AG04449 (cell line): ENCODE measurements at regions of chr20 and their contacts with region 1.

Region 1: DNA sequence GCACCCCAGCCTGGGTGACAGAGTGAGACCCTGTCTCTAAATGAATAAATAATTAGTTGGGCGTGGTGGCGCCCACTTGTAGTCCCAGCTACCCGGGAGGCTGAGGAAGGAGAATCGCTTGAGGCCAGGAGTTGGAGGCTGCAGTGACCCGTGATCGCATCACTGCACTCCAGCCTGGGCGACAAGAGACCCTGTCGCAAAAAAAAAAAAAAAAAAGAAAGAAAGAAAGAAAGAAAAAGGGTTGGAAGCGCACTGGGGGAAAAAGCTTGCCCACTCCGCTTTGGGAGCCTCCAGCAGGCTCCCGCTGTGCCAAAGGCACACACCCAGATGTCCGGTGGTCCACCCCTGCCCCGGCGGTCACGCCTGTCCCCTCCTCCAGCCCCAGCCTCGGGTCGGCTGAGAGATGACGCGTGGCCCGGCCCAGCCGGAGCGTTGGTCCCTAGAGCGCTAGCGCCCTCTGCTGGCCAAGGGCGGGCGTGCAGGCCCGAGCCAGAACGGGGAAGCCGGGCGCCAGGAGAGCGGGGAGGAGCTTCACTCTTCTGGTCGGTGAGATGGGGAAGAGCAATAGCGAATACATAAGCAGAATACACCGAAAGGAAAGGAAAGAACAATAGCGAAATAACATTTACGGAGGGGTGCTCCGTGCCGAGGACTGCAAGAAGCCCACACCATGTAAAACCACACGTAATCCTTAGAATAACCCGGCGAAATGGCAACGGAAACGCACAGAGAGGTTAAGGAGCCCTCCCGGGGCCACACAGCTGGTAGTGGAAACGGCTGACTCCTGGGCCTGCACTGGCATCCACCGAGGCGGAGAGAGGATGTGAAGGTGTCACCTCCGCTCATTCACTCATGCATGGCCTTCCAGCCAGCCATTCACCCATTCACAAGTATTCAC is 41.7 kb downstream of the UBE2V1 start:
- DNase-seq: no peak
- H3K4me3 ChIP-seq: peak overlapping the region; percentile 59
- CTCF ChIP-seq: peak; percentile 98

Region 2: DNA sequence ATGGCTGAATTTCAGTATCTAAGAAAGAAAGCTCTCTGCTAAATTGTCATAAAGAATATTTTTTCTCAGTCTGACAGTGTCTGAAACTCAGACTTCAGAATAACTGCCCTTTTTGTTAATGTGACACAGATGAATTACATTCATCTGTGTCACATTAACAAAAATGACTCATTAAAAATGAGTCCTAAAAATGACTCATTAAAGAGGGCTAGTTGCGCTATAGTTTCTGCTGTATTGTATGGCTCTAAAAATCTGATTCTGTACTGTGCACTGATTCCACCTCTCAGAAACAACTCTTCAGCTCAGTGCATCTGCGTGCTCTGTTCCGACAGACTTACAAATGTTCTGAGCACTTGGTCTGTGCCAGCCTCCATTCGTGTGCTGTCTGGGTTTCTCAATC is 120.1 kb before region 1 on chr20:
- CTCF ChIA-PET with region 1: interaction called, 25 read pairs
- POLR2A ChIA-PET with region 1: no interaction called
- DNase-seq: no peak
- H3K4me3 ChIP-seq: no peak overlapping the region
- CTCF ChIP-seq: no peak

Region 3: GRCh38 chr20:49964964-49965780 is 106.1 kb before region 1 on chr20:
- CTCF ChIA-PET with region 1: interaction called, 66 read pairs
- POLR2A ChIA-PET with region 1: no interaction called
- DNase-seq: no peak
- H3K4me3 ChIP-seq: no peak overlapping the region
- CTCF ChIP-seq: peak; percentile 57

Region 4: GRCh38 chr20:50054626-50055511 is 16.4 kb before region 1 on chr20:
- CTCF ChIA-PET with region 1: interaction called, 40 read pairs
- POLR2A ChIA-PET with region 1: no interaction called
- DNase-seq: no peak
- H3K4me3 ChIP-seq: no peak overlapping the region; the same call in 1 of the 2 replicates
- CTCF ChIP-seq: no peak

Region 5: DNA sequence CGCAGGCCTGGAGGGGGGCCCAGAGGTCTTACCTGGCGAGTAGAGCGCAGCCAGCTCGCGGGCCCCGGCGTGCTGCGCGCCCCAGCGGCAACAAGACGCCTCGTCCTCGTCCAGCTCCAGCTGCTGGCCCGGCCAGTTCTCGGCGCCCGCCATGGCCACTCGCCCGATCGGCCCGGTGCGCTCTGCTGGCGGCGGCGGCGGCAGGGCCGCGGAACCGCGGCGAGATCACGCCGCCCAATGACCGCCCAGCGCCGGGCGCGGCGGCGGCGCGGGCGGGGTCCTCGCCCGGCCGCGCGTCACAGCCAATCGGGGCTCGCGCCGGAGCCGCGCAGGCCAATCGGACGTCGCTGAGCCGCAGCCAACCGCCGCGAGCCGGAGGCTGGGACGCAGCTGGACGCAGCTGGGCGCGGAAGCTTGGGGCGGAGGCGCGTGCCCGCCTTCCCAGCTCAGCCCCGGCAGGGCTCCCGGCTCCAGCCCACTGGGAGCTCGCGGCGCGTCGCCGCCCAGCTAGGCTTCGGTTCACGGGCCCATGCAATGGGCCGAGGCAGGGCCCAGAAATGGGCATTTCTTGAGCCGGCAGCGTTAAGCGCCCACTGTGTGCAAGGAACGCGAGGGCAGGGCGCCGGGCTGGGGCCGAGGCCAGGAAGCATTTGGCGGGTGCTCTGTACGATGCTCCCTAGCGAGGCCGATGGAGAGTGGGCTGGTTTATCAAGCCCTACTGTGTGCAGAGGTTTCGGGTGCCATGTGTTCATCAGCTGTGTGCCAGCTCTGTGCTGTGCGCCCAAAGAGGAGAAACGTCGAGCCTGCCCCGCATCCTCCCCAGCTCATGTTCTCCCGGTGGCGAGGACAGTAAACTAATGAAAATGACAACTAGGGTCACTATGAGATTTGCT is 82.5 kb after region 1 on chr20 and contains the start of gene PEDS1:
- CTCF ChIA-PET with region 1: interaction called, 10 read pairs
- POLR2A ChIA-PET with region 1: no interaction called
- DNase-seq: no peak
- H3K4me3 ChIP-seq: peak within 1 kb of the TSS; percentile 89
- CTCF ChIP-seq: no peak